HepG2 (cell line): ENCODE measurements at regions of chr20 and their contacts with region 1.

Region 1: GRCh38 chr20:17878912-17879602 is 89.5 kb downstream of the SNX5 start:
- DNase-seq: no peak
- ATAC-seq: no peak
- H3K4me3 ChIP-seq: peak overlapping the region; percentile 30 to 61 (median 44)
- H3K27ac ChIP-seq: peak overlapping the region; percentile 78
- H3K4me1 ChIP-seq: peaks cover 98% of the 10 kb centered on the region
- H3K27me3 ChIP-seq: no peaks in the 10 kb centered on the region
- CTCF ChIP-seq: no peak
- EP300 ChIP-seq: no peak
- POLR2A ChIP-seq: no peak
- RAD21 ChIP-seq: no peak

Region 2: DNA sequence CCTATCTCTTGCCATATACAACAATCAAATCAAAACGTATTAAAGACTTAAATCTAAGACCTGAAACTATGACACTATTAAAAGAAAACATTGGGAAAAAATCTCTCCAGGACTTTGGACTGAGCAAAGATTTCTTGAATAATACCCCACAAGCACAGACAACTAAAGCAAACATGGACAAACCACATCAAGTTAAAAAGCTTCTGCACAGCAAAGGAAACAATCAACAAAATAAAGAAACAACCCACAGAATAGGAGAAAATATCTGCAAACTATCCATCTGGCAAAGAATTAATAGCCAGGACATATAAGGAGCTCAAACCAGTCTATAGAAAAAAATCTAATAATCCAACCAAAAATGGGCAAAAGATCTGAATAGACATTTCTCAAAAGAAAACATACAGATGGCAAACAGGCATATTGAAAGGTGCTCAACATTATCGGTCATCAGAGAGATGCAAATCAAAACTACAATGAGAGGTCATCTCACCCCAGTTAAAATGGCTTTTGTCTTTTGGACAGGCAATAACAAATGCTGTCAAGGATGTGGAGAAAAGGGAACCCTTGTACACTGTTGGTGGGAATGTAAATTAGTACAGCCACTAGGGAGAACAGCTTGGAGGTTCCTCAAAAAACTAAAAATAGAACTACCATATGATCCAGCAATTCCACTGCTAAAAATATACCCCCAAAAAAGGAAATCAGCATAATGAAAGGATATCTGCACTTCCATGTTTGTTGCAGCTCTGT is 13.3 kb after region 1 on chr20:
- CTCF ChIA-PET with region 1: no interaction called
- POLR2A ChIA-PET with region 1: interaction called, 140 read pairs
- in situ Hi-C with region 1: no loop called
- intact Hi-C with region 1: loop called (anchors 1 kb)
- DNase-seq: peak; percentile 76
- ATAC-seq: no peak
- H3K4me3 ChIP-seq: peak overlapping the region in 1 of 3 experiments; percentile 2; a peak in 2 of 6 replicates
- H3K27ac ChIP-seq: no peak overlapping the region
- H3K4me1 ChIP-seq: peaks cover 79% of the 10 kb centered on the region
- H3K27me3 ChIP-seq: no peaks in the 10 kb centered on the region
- CTCF ChIP-seq: no peak
- EP300 ChIP-seq: peak in 1 of 2 experiments; percentile 86; a peak in 2 of 4 replicates
- POLR2A ChIP-seq: no peak
- RAD21 ChIP-seq: no peak

Region 3: GRCh38 chr20:17925141-17925939 is 46.3 kb after region 1 on chr20:
- CTCF ChIA-PET with region 1: no interaction called
- POLR2A ChIA-PET with region 1: no interaction called
- in situ Hi-C with region 1: no loop called
- intact Hi-C with region 1: loop called (anchors 1 kb)
- DNase-seq: no peak
- ATAC-seq: peak; percentile 29
- H3K4me3 ChIP-seq: 0 out of 6 replicates have a peak overlapping the region, but pooled peaks of 1 of the 3 experiments have one; percentile 13
- H3K27ac ChIP-seq: no peak overlapping the region
- H3K4me1 ChIP-seq: peaks cover 32% of the 10 kb centered on the region
- H3K27me3 ChIP-seq: peaks cover 8 to 36% of the 10 kb centered on the region in 2 experiments; a peak in 3 of 5 replicates
- CTCF ChIP-seq: no peak
- EP300 ChIP-seq: no peak
- POLR2A ChIP-seq: no peak
- RAD21 ChIP-seq: no peak